Activated CD8-positive, alpha-beta T cell treated with anti-CD3 and anti-CD28 coated beads, Interleukin-2, amount 10 ng/mL, durations not matched to agents 7 days and 5 days (primary cell): ENCODE measurements at regions of chr12 and their contacts with region 1.

Region 1: DNA sequence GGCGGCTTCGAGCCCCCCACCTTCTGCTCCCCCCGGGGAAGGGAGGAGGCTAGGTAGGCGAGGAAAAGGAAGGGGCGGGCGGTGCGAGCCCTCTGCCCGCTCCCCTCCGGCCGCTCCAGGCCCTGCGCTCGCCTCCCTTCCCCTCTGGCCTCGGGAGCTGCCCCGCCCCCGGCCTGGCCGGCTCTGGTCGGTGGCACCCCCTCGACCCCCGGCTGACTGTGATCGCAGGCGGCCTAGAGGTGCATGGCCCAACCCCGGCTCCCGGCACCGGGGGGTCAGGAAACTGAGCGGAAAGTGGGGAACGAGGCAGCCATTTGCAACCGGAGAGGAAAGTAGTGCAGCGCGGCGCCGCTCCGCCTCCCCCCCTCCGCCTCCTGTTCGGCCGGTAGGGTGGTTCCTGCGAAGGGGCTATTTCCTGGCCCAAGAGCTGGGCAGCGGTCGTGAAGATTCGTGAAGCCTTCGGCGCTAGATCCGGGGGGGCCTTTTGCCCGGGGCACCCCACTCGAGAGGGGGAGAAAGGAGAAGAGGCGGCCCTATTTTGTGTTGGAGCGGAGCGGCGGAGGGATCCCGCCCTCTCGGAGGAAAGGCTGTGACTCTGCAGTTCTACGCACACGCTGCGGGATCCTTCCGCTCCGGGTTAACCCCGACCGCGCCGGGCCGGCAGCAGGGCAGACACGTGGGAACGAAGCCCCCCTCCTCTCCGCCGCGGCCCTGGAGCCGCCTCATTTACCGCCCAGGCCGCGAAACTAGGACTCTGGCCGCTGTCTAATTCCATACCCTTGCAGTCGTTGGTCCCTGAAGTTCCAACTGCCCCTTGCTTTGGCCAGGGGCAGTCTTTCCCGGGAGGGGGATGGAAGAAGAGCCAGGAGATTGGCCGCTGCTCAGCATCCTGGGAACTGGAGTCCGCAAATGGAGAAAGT is at the start of gene KMT2D:
- DNase-seq: peak; percentile 92
- ATAC-seq: peak; percentile 78
- H3K4me3 Mint-ChIP-seq: peak within 1 kb of the TSS; percentile 95
- H3K27ac Mint-ChIP-seq: peak within 1 kb of the TSS; percentile 96
- H3K4me1 Mint-ChIP-seq: peaks cover 49% of the 10 kb centered on the region
- H3K27me3 Mint-ChIP-seq: no peaks in the 10 kb centered on the region
- total RNA-seq, gene KMT2D: 113 TPM

Region 2: DNA sequence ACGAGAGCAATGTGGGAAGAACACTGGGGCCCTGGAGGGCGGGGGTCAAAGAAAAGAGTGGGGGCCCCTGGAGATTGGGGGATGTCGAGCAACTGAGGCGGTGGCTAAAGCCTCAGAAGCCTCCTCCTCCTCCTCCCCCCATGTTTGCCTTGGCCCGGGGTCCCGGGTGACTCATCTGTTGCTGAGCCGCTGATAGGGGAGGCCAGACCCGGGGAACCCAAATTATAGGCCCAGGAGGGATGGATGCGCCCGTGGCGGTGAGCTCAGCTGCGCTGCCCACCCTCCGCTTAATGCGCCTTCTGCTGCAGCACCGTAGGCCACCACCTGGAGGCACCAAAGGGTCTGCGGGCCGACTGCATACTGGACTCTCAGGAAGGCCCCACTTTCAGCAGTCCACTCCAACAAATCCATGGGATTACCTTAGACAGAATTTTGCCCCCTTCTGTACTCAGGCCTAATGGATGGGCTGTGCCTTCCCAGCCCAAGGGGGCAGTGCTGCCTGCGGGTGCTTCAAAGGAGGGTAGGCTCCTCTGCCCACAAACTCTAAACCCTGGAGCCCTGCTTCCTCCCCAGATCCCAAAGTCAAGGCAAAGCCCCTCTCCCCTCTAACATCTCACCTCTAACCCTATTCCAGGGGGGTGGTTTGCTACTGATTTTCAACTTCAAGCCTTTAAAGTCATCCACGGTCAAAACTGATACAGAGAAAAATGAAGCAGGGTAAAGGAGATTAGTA is 86.4 kb before region 1 on chr12:
- CTCF ChIA-PET with region 1: no interaction called
- POLR2A ChIA-PET with region 1: no interaction called
- DNase-seq: peak; percentile 62
- ATAC-seq: peak; percentile 22
- H3K4me3 Mint-ChIP-seq: no peak overlapping the region
- H3K27ac Mint-ChIP-seq: no peak overlapping the region
- H3K4me1 Mint-ChIP-seq: peaks cover 54% of the 10 kb centered on the region
- H3K27me3 Mint-ChIP-seq: peaks cover 83% of the 10 kb centered on the region

Region 3: DNA sequence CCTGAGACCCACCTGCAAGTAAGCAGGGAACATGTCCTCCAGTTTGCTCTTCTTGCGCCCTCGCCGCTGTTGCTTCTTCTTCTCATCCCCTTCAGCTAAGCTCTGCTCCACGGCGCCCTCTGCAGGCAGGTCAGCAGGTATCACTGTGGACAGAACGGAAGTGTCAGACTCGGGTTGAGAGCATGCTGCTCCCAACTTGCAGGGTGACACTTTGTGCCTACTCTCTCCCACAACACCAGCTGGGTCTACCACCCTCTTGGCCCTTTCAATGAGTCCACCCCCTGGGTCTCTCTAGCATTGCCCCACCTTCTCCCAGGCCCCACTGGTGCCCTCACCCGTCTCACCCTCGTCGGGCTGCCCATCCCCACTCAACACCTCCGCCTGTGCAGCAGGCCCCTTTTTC is 16.6 kb before region 1 on chr12:
- CTCF ChIA-PET with region 1: interaction called, 35 read pairs
- POLR2A ChIA-PET with region 1: interaction called, 4 read pairs
- DNase-seq: peak; percentile 85
- ATAC-seq: peak; percentile 84
- H3K4me3 Mint-ChIP-seq: no peak overlapping the region
- H3K27ac Mint-ChIP-seq: peak overlapping the region; percentile 27
- H3K4me1 Mint-ChIP-seq: peaks cover 4% of the 10 kb centered on the region
- H3K27me3 Mint-ChIP-seq: no peaks in the 10 kb centered on the region

Region 4: DNA sequence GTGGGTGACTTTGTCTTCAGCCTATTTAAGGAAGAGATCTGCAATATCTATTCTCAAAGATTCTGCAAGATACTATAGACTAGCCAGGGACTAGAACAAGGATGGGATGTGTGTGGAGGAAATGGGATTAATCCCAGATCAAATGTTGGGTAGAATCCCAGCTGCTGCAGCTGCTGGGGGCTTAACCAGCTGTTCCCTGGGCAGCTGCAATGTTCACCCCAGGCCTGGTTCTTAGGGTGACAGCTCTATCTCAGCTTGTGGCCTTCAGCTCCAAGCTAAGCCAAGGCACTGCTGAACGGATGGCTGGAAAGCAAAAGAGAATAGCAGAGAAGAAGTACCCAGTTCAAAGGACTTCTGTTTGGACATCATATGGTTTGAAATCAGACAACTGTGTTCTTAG is 19.3 kb after region 1 on chr12:
- CTCF ChIA-PET with region 1: interaction called, 155 read pairs
- POLR2A ChIA-PET with region 1: interaction called, 5 read pairs
- DNase-seq: no peak
- ATAC-seq: no peak
- H3K4me3 Mint-ChIP-seq: no peak overlapping the region
- H3K27ac Mint-ChIP-seq: no peak overlapping the region
- H3K4me1 Mint-ChIP-seq: no peaks in the 10 kb centered on the region
- H3K27me3 Mint-ChIP-seq: peaks cover 6% of the 10 kb centered on the region

Region 5: GRCh38 chr12:49110464-49111155 is 50.1 kb after region 1 on chr12 and contains the start of gene LMBR1L:
- CTCF ChIA-PET with region 1: interaction called, 29 read pairs
- POLR2A ChIA-PET with region 1: interaction called, 3 read pairs
- DNase-seq: peak; percentile 99
- ATAC-seq: peak; percentile 99
- H3K4me3 Mint-ChIP-seq: peak within 1 kb of the TSS; percentile 97
- H3K27ac Mint-ChIP-seq: peak within 1 kb of the TSS; percentile 79
- H3K4me1 Mint-ChIP-seq: peaks cover 29% of the 10 kb centered on the region
- H3K27me3 Mint-ChIP-seq: no peaks in the 10 kb centered on the region
- total RNA-seq, gene LMBR1L: 35.8 to 37.8 TPM

Region 6: DNA sequence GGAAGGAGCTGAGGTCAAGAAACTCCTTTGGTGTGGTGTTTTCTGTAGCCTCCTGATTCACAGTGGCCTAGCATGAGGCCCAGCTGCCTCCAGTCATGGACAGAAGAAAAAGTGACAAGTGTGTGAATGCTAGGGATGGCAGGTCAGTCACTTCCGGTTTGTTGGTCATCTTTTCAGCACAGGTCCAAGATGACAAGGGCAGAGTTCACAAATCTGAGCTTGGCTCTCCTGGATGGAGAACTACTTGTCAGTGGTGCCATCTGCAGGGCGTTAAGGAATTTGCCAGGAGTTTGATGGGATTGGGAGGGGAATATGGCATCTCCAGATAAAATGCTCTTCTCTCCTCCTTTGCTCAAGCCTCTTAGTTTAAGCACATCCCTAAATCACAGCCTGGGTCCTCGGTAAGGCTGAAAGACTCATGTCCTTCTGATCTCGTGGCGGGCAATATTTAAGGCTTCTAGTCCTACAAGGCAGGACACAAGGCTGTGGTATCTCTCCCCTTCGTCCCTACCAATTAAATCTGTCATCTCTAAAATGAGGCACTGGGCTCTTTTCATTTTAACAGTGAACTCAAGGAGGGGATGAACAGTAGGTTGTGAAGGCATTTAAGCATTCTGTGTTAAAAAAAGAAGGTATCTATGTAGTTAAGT is 60.7 kb after region 1 on chr12:
- CTCF ChIA-PET with region 1: interaction called, 18 read pairs
- POLR2A ChIA-PET with region 1: no interaction called
- DNase-seq: no peak
- ATAC-seq: no peak
- H3K4me3 Mint-ChIP-seq: no peak overlapping the region
- H3K27ac Mint-ChIP-seq: no peak overlapping the region
- H3K4me1 Mint-ChIP-seq: peaks cover 2% of the 10 kb centered on the region
- H3K27me3 Mint-ChIP-seq: peaks cover 4% of the 10 kb centered on the region

Region 7: DNA sequence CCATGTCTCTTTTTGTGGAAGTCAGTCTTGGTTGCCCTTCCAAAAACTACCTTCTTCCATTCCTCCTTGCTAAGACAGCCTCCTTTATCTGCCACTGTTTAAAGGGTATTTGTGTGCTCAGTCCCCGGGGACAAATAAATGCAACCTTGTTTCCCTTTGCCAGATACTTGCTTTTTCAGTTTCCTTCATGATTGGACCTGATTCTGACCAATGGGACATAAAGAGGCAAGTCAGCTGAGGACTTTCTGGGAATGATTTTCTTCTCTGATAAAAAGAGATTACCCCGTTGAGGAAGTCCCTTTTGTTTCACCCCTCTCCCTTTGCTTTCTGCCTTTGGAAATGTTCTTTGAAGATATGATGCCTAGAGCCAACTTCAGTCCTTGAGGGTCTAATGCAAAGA is 78.1 kb after region 1 on chr12:
- CTCF ChIA-PET with region 1: no interaction called
- POLR2A ChIA-PET with region 1: no interaction called
- DNase-seq: no peak
- ATAC-seq: no peak
- H3K4me3 Mint-ChIP-seq: no peak overlapping the region
- H3K27ac Mint-ChIP-seq: no peak overlapping the region
- H3K4me1 Mint-ChIP-seq: peaks cover 9% of the 10 kb centered on the region
- H3K27me3 Mint-ChIP-seq: no peaks in the 10 kb centered on the region

Region 8: DNA sequence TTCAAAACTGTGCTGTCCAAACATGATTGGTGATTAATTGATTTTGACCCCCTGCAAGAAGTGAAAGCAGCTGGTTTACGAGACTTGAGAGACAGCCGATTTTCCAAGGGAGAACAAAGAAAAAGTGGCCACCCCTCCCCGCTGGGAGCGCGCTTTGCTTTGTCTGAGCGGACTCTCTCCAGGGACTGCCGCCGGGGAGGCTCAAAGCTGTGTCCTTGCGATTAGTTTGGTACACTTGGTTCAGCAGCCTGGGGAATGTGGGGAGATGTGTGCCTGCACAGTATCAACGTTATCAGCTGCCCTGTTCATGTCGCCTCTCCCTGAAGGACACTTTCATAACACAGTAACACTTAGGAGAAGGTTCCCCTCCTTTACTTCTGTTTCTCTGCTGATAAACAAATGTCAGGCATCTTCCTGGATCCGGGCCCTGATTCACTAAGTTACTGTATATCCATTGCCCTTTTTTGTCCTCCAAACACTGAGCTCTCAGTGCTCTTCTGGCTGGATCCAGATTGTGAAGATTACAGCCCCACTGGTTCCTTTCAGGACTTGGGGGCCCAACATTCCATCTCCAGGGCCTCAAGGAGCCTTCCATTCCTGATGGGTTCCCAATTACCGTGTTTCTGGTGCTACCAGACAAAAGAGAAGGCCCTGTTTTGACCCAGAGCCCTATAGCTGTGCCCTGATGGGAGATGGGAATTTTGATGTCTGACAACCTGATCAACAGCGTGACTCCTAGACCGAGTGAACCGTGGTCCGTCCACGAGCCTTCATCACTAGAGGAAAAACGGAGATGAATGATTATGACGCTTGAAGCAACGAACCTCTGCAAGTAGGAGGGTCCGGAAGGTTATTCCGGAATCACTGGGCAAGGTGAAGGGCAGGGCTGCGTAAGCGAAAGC is 172.7 kb after region 1 on chr12:
- CTCF ChIA-PET with region 1: interaction called, 36 read pairs
- POLR2A ChIA-PET with region 1: interaction called, 3 read pairs
- DNase-seq: no peak
- ATAC-seq: no peak
- H3K4me3 Mint-ChIP-seq: no peak overlapping the region
- H3K27ac Mint-ChIP-seq: peak overlapping the region; percentile 29
- H3K4me1 Mint-ChIP-seq: peaks cover 21% of the 10 kb centered on the region
- H3K27me3 Mint-ChIP-seq: peaks cover 10% of the 10 kb centered on the region